IMR-90 (cell line): ENCODE measurements at regions of chr6 and their contacts with region 1.

Region 1: DNA sequence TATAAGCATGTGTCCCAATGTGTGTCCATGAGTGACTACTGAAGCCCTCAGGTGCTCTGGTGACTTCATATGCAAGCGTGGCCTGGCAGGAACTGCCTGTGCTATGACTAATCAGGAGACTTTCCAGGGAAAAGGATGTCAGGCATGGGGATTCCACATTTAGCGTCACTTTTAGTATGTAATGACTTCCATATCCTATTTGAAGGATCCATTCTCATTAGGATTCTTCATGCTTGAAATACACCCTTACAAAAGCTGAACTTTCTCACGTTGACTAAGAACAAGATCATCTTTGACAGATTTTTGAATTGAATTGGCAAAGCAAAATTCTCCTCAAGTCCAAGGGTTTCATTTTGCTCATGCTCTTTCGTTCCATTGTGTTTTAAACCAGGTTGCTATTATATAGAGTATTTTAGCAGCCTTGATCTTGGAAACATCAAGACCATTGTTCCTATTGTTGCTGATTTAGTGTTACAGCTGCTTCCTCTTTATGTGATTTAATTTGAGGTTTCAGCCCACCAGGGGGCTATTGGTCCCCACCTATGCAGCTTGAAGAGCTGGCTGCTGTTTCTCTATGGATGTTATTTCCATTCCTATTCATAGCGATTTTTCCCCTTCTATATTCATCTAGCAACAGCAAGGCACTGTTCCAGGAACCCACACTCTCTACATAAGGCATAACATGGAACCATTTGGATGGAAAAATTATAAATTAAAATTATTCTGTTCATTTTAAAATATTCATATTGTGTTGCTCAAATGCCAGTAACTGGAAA is 418.6 kb downstream of the CDKAL1 start:
- DNase-seq: peak; percentile 83
- ATAC-seq: peak; percentile 35; the same call in 1 of the 2 replicates
- H3K4me3 ChIP-seq: no peak overlapping the region
- H3K27ac ChIP-seq: no peak overlapping the region
- H3K4me1 ChIP-seq: peaks cover 5% of the 10 kb centered on the region
- H3K27me3 ChIP-seq: no peaks in the 10 kb centered on the region
- CTCF ChIP-seq: 0 out of 2 replicates have a peak, but pooled peaks have one; percentile 3
- POLR2A ChIP-seq: no peak
- RAD21 ChIP-seq: no peak

Region 2: GRCh38 chr6:20933057-20933788 is 19.7 kb before region 1 on chr6:
- CTCF ChIA-PET with region 1: no interaction called
- POLR2A ChIA-PET with region 1: interaction called, 10 read pairs
- dilution Hi-C with region 1: no loop called
- in situ Hi-C with region 1: no loop called
- intact Hi-C with region 1: no loop called
- DNase-seq: no peak
- ATAC-seq: no peak
- H3K4me3 ChIP-seq: no peak overlapping the region
- H3K27ac ChIP-seq: no peak overlapping the region
- H3K4me1 ChIP-seq: peaks cover 7% of the 10 kb centered on the region
- H3K27me3 ChIP-seq: no peaks in the 10 kb centered on the region
- CTCF ChIP-seq: no peak
- POLR2A ChIP-seq: no peak
- RAD21 ChIP-seq: no peak

Region 3: DNA sequence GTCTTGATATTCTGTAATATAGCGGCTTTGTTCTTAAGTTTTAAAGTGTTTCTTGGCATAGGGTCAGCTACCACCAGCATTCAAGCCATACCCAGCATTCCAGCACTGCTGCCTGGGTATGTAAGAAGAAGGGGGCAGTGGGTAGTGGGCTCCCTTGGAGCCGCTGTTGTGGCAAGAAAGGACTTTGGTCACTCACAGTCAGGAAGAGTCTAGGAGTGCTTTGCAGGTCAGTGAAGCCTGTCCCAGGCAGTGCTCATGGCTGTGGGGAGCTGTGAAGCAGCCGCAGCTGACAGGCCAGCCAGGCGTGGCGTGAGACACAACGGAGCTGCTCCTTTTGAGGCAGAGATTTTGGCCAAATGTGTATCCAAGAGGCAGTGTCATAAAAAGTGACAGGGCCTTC is 93.4 kb after region 1 on chr6:
- CTCF ChIA-PET with region 1: no interaction called
- POLR2A ChIA-PET with region 1: no interaction called
- dilution Hi-C with region 1: no loop called
- in situ Hi-C with region 1: no loop called
- intact Hi-C with region 1: no loop called
- DNase-seq: no peak
- ATAC-seq: peak; percentile 11; the same call in 1 of the 2 replicates
- H3K4me3 ChIP-seq: no peak overlapping the region
- H3K27ac ChIP-seq: no peak overlapping the region
- H3K4me1 ChIP-seq: no peaks in the 10 kb centered on the region
- H3K27me3 ChIP-seq: no peaks in the 10 kb centered on the region
- CTCF ChIP-seq: no peak
- POLR2A ChIP-seq: no peak
- RAD21 ChIP-seq: no peak